ENCODE measurements at regions of chr6 and their contacts with region 1.

Region 1: DNA sequence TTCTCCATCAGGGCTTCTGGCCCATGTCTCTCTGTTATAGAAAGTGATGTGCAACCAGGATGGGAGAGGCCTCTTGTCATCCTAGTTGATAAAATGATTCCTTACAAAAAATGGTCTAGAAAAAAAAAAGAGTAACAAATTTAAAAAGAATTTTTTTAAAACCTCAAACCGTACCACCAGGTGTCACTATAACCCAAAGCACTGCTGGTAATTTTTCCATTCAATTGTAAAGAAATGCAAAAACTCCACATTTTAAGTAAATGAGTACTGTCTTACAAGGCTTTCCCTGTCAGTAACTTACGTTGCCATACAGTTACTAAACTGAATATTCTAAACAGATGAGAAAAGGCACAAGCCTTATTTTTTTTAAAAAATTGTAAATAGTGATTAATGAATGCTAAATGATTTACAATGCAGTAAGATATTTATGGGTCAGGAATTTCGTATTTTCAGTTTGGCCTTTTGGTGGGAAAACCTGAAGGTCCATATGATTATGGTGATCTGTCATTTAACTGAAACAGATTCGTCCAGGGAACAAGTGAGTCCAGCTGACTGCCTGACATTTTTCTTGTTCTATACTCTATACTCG is 95.4 kb downstream of the OGFRL1 start:
- DNase-seq: peak; percentile 67
- H3K4me3 ChIP-seq: no peak overlapping the region
- H3K27ac ChIP-seq: no peak overlapping the region
- H3K4me1 ChIP-seq: peaks cover 35% of the 10 kb centered on the region
- H3K27me3 ChIP-seq: no peaks in the 10 kb centered on the region

Region 2: DNA sequence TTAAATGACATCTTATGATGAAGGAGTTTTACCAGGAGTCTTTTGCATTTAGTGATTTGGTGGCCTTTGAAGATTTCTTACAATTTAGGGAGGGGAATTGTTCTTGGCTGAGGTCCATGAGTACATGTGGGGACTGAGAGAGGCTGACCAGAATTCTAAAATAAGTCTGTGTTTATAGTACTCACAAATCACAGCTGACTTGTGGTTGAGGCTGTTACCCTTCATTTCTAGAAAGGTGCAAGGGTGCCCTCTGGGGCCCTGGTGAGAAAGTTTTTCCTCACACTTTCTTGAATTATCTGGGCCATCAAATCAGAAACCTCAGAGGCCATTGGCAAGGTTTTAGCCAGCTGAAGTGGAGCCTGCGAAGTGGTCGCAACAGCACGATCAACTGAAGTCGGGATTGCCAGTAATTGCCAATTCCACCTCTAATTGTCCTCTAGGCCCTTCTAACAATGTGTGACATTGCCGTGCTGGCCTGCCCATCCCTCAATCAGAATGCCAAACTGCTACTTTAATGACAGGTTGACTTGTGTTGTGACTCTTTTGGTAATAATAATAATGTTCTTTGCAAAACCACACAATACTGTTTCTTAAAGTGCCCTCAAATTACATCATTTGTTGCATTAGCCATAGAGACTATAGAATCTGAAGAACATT is 126.2 kb after region 1 on chr6:
- in situ Hi-C with region 1: loop called (anchors 10 kb)
- DNase-seq: peak; percentile 77
- H3K4me3 ChIP-seq: no peak overlapping the region
- H3K27ac ChIP-seq: no peak overlapping the region
- H3K4me1 ChIP-seq: peaks cover 8% of the 10 kb centered on the region
- H3K27me3 ChIP-seq: no peaks in the 10 kb centered on the region

Region 3: GRCh38 chr6:72084992-72085569 is 701.1 kb after region 1 on chr6:
- in situ Hi-C with region 1: loop called (anchors 25 kb)
- DNase-seq: peak; percentile 46
- H3K4me3 ChIP-seq: no peak overlapping the region
- H3K27ac ChIP-seq: no peak overlapping the region
- H3K4me1 ChIP-seq: no peaks in the 10 kb centered on the region
- H3K27me3 ChIP-seq: 0 out of 2 replicates have a peak, but pooled peaks cover 3% of the 10 kb centered on the region

Region 4: GRCh38 chr6:72894091-72894490 is 1510.1 kb after region 1 on chr6:
- in situ Hi-C with region 1: no loop called
- DNase-seq: no peak
- H3K4me3 ChIP-seq: no peak overlapping the region
- H3K27ac ChIP-seq: no peak overlapping the region
- H3K4me1 ChIP-seq: no peaks in the 10 kb centered on the region
- H3K27me3 ChIP-seq: no peaks in the 10 kb centered on the region